Right ventricle myocardium inferior (tissue), 1 donor: ENCODE measurements at regions of chr6 and their contacts with region 1.

Region 1: DNA sequence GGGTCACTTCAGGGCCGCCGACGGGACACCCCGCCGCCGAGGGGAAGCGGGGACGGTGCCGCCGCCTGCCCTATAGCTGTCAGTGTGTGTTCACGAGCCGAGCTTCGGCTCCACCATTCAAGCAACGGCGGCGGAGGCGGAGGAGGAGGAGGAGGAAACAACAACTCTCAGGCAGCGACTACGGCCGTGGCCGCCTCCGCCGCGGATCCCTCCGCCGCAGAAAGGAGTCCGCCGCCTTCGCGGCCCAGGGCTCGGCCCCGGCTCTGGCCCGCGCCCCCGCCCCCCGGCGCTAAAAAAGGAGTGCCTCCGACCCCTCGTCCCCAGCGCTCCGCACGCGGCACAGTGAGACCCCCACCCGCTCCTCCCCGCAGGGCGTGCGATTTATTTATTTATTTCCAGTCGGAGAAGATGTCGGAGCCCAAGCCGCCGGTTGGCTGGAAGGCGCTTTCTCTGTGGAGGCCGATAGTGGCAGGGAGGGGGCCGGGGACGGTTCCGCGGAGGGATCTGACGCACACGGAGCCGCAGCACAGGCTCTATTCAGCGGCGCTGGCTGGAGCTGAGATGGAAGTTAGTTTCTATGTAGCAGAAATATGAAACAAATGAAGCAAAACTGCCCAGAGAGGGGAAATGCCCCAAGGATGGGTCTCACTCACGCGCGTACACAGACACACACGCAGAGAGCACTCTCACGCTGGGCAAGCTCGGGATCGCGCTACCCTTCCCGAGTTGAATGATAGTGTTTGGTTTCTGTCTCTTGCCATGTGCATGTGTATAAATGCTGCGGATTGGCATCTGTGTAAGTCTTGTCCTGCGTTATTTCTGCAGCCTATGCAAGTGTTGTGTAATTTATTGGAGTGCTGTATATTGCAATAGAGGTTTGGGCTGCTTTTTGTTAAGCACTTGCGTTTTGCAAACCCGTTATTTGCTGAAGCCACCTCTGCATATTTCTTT is at the start of gene PHIP:
- DNase-seq: peak; percentile 97
- ATAC-seq: peak; percentile 95
- total RNA-seq, gene PHIP: 13.8 TPM

Region 2: DNA sequence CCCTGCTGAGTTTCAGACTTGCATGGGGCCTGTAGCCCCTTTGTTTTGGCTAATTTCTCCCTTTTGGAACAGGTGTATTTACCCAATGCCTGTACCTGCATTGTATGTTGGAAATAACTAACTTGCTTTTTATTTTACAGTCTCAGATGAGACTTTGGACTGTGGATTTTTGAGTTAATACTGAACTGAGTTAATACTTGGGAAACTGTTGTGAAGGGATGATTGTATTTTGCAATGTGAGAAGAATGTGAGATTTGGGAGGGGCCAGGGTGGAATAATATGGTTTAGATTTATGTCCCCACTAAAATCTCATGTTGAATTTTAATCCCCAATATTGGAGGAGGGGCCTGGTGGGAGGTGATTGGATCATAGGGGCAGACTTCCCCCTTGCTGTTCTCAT is 310.1 kb before region 1 on chr6:
- intact Hi-C with region 1: no loop called
- DNase-seq: no peak
- ATAC-seq: no peak

Region 3: GRCh38 chr6:78867370-78868040 is 210.8 kb before region 1 on chr6 and contains the start of gene IRAK1BP1:
- intact Hi-C with region 1: loop called (anchors 10 kb)
- DNase-seq: peak; percentile 89
- ATAC-seq: peak; percentile 99
- total RNA-seq, gene IRAK1BP1: 3.5 TPM

Region 4: DNA sequence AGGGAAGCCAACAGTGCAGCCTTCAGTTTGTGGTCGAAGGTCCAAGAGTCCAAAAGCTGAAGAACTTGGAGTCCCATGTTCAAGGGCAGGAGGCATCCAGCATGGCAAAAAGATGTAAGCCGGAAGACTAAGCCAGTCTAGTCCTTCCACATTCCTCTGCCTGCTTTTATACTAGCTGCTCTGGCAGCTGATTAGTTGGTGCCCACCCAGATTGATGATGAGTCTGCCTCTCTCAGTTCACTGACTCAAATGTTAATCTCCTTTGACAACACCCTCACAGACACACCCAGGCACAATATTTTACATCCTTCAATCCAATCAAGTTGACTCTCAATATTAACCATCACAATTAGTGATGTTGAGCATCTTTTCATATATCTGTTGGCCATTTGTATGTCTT is 22.8 kb after region 1 on chr6:
- intact Hi-C with region 1: no loop called
- DNase-seq: no peak
- ATAC-seq: no peak

Region 5: GRCh38 chr6:79536954-79537747 is 458.8 kb after region 1 on chr6 and contains the start of gene LCA5:
- intact Hi-C with region 1: loop called (anchors 5 kb)
- DNase-seq: peak; percentile 92
- ATAC-seq: peak; percentile 99
- total RNA-seq, gene LCA5: 2.2 TPM